ENCODE measurements at regions of chr10 and their contacts with region 1.

Region 1: DNA sequence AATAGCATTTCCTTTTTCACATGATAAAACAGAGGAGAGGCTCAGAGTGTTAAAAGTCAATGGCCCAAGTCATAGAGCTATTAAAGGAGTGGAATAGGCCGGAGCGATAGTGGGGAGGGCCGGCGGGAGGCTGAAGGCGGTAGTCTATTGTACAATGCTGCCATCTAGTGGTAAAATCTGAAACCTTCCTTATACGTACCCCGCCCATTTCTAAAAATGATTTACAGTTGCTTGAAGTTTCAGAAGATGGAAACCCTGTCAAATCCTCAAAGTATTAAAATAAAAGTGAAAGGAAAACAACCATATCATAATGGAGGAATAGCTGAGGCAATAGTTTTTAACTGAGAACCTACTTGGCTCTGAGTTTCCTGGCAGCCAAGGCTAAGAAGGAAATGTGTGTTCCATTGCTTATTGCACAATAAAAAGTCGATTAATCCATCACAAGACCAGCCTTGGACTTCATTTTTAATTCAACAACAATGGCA is 209.1 kb downstream of the CCSER2 start:
- DNase-seq: peak in 3 of 5 donors; percentile 36 to 58 (median 50)
- ATAC-seq: peak; percentile 85 to 93 (median 92)
- H3K4me3 ChIP-seq: no peak overlapping the region
- H3K27ac ChIP-seq: no peak overlapping the region
- H3K4me1 ChIP-seq: peaks cover 0 to 14% (median 4%) of the 10 kb centered on the region in 12 donors
- H3K27me3 ChIP-seq: peaks cover 6 to 36% (median 21%) of the 10 kb centered on the region in 9 donors
- CTCF ChIP-seq: peak; percentile 79 to 95 (median 84)
- POLR2A ChIP-seq: no peak

Region 2: GRCh38 chr10:84205049-84205852 is 332.2 kb before region 1 on chr10:
- intact Hi-C with region 1: no loop called
- DNase-seq: peak in 4 of 5 donors; percentile 38 to 75 (median 50)
- ATAC-seq: peak; percentile 68 to 78 (median 76)
- H3K4me3 ChIP-seq: no peak overlapping the region
- H3K27ac ChIP-seq: no peak overlapping the region
- H3K4me1 ChIP-seq: no peaks in the 10 kb centered on the region
- H3K27me3 ChIP-seq: peaks cover 0 to 15% (median 0%) of the 10 kb centered on the region in 9 donors
- CTCF ChIP-seq: peak; percentile 50 to 70 (median 61)
- POLR2A ChIP-seq: no peak

Region 3: DNA sequence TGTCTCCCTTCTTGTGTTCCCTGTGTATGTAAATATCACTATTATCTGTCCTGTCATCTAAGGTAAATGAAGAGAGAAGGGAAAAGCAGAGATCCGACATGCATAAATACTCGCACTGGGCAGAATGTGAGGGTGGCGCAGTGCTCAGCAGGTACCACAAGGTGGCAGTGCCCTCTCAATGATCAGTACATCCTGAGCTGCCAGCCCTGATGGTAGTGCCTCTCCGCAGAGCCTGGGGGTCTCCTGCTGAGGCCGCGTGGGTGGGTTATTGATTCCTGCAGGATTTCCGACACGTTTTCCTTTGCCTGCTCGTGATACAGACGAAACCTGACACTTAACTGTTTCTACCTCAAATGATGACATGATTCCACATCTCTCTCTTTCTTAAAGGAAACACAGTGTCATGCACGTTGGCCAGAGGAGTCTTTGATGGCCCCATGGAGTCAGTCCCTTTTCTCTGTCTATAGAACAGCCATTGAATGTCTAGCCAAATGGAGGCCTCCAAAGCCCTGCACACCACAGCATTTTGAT is 272.8 kb before region 1 on chr10:
- intact Hi-C with region 1: loop called (anchors 1 to 5 kb)
- DNase-seq: peak in 4 of 5 donors; percentile 52 to 68 (median 60)
- ATAC-seq: peak; percentile 69 to 95 (median 90)
- H3K4me3 ChIP-seq: no peak overlapping the region
- H3K27ac ChIP-seq: no peak overlapping the region
- H3K4me1 ChIP-seq: peaks cover 0 to 7% (median 2%) of the 10 kb centered on the region in 12 donors
- H3K27me3 ChIP-seq: peaks cover 0 to 13% (median 0%) of the 10 kb centered on the region in 9 donors
- CTCF ChIP-seq: peak; percentile 84 to 96 (median 92)
- POLR2A ChIP-seq: no peak

Region 4: GRCh38 chr10:84352251-84352842 is 185.1 kb before region 1 on chr10:
- intact Hi-C with region 1: loop called in 1 of 10 experiments (anchors 1 kb)
- DNase-seq: peak; percentile 39 to 56 (median 48)
- ATAC-seq: peak in 3 of 4 donors; percentile 65 to 80 (median 79)
- H3K4me3 ChIP-seq: no peak overlapping the region
- H3K27ac ChIP-seq: no peak overlapping the region
- H3K4me1 ChIP-seq: peaks cover 0 to 52% (median 24%) of the 10 kb centered on the region in 12 donors
- H3K27me3 ChIP-seq: no peaks in the 10 kb centered on the region
- CTCF ChIP-seq: peak; percentile 54 to 76 (median 66)
- POLR2A ChIP-seq: no peak

Region 5: GRCh38 chr10:84375011-84375410 is 162.5 kb before region 1 on chr10:
- intact Hi-C with region 1: loop called (anchors 1 to 5 kb)
- DNase-seq: peak in 1 of 5 donors; percentile 11
- ATAC-seq: peak in 1 of 4 donors; percentile 50
- H3K4me3 ChIP-seq: no peak overlapping the region
- H3K27ac ChIP-seq: no peak overlapping the region
- H3K4me1 ChIP-seq: peaks cover 0 to 5% (median 0%) of the 10 kb centered on the region in 12 donors
- H3K27me3 ChIP-seq: no peaks in the 10 kb centered on the region
- CTCF ChIP-seq: peak; percentile 50 to 83 (median 70)
- POLR2A ChIP-seq: no peak

Region 6: DNA sequence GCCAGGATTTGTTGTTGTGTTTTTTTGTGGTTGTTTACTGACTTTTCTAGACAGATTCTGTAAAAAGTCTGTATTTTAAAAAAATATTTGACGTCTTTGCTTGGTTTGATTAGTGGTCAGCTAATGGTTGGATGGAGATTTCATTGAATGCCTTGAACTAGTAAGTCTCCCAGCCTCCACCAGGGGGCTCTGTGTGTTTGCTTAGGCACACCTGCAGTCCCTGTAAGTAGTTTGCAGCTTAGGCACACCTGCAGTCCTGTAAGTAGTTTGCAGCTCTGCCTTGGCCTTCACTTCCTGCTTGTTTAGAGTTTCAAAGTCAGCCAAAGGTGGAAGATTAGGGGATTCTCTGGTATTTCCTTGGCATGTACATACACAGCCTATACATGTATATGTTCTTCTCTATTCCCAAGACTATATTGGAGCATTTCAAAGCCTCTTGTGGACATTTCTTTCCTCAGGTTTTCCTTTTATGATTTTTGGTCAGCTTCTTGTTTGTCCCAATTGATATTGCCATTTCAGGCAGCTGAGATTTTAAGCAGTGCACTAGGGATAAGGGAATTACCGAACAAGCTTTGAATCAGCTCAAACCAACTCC is 107.5 kb before region 1 on chr10:
- intact Hi-C with region 1: loop called in 1 of 10 experiments (anchors 5 kb)
- DNase-seq: peak; percentile 38 to 65 (median 60)
- ATAC-seq: peak in 3 of 4 donors; percentile 34 to 73 (median 54)
- H3K4me3 ChIP-seq: no peak overlapping the region
- H3K27ac ChIP-seq: no peak overlapping the region
- H3K4me1 ChIP-seq: peaks cover 2 to 90% (median 45%) of the 10 kb centered on the region in 12 donors
- H3K27me3 ChIP-seq: no peaks in the 10 kb centered on the region
- CTCF ChIP-seq: peak; percentile 41 to 73 (median 58)
- POLR2A ChIP-seq: no peak

Region 7: DNA sequence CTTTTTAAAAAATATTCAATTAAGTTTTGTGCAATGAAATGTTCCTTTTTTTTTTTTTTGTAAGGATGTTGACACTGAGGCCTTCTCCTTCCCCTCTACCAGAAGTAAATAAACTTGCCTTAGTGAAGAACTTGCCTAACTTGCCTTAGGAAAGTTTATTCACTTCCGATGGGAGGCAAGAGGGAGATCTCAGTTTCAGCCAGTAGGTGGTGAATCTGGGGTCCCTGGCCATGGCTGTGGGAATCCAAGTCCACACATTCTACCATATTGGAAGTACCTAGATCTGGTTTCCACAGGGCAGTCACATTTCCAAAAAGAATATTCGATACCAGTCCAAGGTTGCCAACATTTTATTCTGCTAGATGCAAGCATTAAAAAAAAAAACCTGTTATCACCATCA is 61.8 kb after region 1 on chr10:
- intact Hi-C with region 1: no loop called
- DNase-seq: no peak
- ATAC-seq: no peak
- H3K4me3 ChIP-seq: no peak overlapping the region
- H3K27ac ChIP-seq: no peak overlapping the region
- H3K4me1 ChIP-seq: no peaks in the 10 kb centered on the region
- H3K27me3 ChIP-seq: peaks cover 0 to 6% (median 2%) of the 10 kb centered on the region in 9 donors
- CTCF ChIP-seq: no peak
- POLR2A ChIP-seq: no peak

Region 8: GRCh38 chr10:84685047-84685660 is 147.7 kb after region 1 on chr10:
- intact Hi-C with region 1: no loop called
- DNase-seq: no peak
- ATAC-seq: no peak
- H3K4me3 ChIP-seq: no peak overlapping the region
- H3K27ac ChIP-seq: no peak overlapping the region
- H3K4me1 ChIP-seq: no peaks in the 10 kb centered on the region
- H3K27me3 ChIP-seq: peaks cover 0 to 5% (median 0%) of the 10 kb centered on the region in 9 donors
- CTCF ChIP-seq: no peak
- POLR2A ChIP-seq: no peak

Measured in heart left ventricle (tissue), 16 donors.